ENCODE measurements at regions of chr10 and their contacts with region 1.

Region 1: GRCh38 chr10:32239770-32240169 is 107.2 kb downstream of the EPC1 start:
- DNase-seq: no peak
- H3K4me3 Mint-ChIP-seq: no peak overlapping the region
- H3K27ac Mint-ChIP-seq: no peak overlapping the region
- H3K4me1 Mint-ChIP-seq: peaks cover 14% of the 10 kb centered on the region
- H3K27me3 Mint-ChIP-seq: peaks cover 2% of the 10 kb centered on the region

Region 2: GRCh38 chr10:31830887-31831286 is 408.9 kb before region 1 on chr10:
- CTCF ChIA-PET with region 1: no interaction called
- POLR2A ChIA-PET with region 1: no interaction called
- intact Hi-C with region 1: no loop called
- DNase-seq: no peak
- H3K4me3 Mint-ChIP-seq: no peak overlapping the region
- H3K27ac Mint-ChIP-seq: no peak overlapping the region
- H3K4me1 Mint-ChIP-seq: peaks cover 3% of the 10 kb centered on the region
- H3K27me3 Mint-ChIP-seq: no peaks in the 10 kb centered on the region

Region 3: GRCh38 chr10:31921031-31921430 is 318.7 kb before region 1 on chr10:
- CTCF ChIA-PET with region 1: no interaction called
- POLR2A ChIA-PET with region 1: no interaction called
- intact Hi-C with region 1: loop called (anchors 5 kb)
- DNase-seq: peak; percentile 43
- H3K4me3 Mint-ChIP-seq: peak overlapping the region; percentile 45
- H3K27ac Mint-ChIP-seq: peak overlapping the region; percentile 35
- H3K4me1 Mint-ChIP-seq: peaks cover 56% of the 10 kb centered on the region
- H3K27me3 Mint-ChIP-seq: no peaks in the 10 kb centered on the region

Region 4: DNA sequence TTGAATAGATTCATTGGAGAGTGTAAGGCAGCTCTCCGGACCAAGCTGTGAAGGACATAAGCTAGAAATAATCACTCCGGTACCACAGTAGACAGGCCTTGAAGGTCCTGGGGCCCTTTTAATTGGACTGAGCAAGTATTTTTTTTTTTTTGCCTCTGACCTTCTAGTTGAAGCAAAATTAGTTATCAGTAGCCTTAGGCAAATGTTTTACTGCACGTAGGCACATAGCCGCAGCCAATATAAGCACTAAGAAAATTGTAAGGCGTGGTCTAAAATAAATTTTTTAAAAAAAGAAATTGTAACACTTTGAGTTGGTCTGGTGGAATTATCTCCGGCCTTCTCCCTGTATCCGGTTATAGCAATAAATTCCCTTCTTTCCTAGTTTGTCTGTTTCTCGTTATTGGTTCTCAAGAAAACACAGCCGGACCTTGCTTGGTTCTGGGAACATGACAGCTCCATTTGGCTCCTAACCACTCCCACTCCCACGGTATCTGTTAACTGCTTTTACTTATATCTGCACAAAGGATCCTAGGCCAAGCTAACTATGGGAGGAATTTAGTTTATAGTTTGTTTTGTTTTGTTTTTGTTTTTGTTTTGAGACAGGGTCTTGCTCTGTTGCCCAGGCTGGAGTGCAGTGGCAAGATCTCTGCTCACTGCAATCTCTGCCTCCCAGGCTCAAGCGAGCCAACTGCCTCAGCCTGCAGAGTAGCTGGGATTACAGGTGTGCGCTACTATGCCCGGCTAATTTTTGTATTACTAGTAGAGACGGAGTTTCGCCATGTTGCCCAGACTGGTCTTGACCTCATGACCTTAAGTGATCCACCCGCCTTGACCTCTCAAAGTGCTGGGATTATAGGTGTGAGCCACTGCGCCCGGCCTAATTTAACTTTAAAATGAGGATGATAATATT is 59.1 kb before region 1 on chr10:
- CTCF ChIA-PET with region 1: no interaction called
- POLR2A ChIA-PET with region 1: no interaction called
- intact Hi-C with region 1: no loop called
- DNase-seq: no peak
- H3K4me3 Mint-ChIP-seq: no peak overlapping the region
- H3K27ac Mint-ChIP-seq: no peak overlapping the region
- H3K4me1 Mint-ChIP-seq: no peaks in the 10 kb centered on the region
- H3K27me3 Mint-ChIP-seq: no peaks in the 10 kb centered on the region

Region 5: GRCh38 chr10:32256613-32257437 is 17.1 kb after region 1 on chr10:
- CTCF ChIA-PET with region 1: interaction called, 39 read pairs
- POLR2A ChIA-PET with region 1: interaction called, 6 read pairs
- intact Hi-C with region 1: no loop called
- DNase-seq: peak; percentile 81
- H3K4me3 Mint-ChIP-seq: no peak overlapping the region
- H3K27ac Mint-ChIP-seq: no peak overlapping the region
- H3K4me1 Mint-ChIP-seq: peaks cover 15% of the 10 kb centered on the region
- H3K27me3 Mint-ChIP-seq: no peaks in the 10 kb centered on the region

Region 6: GRCh38 chr10:32332299-32332750 is 92.6 kb after region 1 on chr10:
- CTCF ChIA-PET with region 1: interaction called, 3 read pairs
- POLR2A ChIA-PET with region 1: interaction called, 5 read pairs
- intact Hi-C with region 1: loop called (anchors 2 kb)
- DNase-seq: peak; percentile 90
- H3K4me3 Mint-ChIP-seq: peak overlapping the region; percentile 75
- H3K27ac Mint-ChIP-seq: peak overlapping the region; percentile 91
- H3K4me1 Mint-ChIP-seq: peaks cover 93% of the 10 kb centered on the region
- H3K27me3 Mint-ChIP-seq: no peaks in the 10 kb centered on the region

Region 7: GRCh38 chr10:32346134-32346550 is 106.4 kb after region 1 on chr10:
- CTCF ChIA-PET with region 1: interaction called, 12 read pairs
- POLR2A ChIA-PET with region 1: interaction called, 8 read pairs
- intact Hi-C with region 1: loop called (anchors 2 kb)
- DNase-seq: peak; percentile 97
- H3K4me3 Mint-ChIP-seq: peak overlapping the region; percentile 94
- H3K27ac Mint-ChIP-seq: peak overlapping the region; percentile 99
- H3K4me1 Mint-ChIP-seq: peaks cover 63% of the 10 kb centered on the region
- H3K27me3 Mint-ChIP-seq: no peaks in the 10 kb centered on the region

Region 8: DNA sequence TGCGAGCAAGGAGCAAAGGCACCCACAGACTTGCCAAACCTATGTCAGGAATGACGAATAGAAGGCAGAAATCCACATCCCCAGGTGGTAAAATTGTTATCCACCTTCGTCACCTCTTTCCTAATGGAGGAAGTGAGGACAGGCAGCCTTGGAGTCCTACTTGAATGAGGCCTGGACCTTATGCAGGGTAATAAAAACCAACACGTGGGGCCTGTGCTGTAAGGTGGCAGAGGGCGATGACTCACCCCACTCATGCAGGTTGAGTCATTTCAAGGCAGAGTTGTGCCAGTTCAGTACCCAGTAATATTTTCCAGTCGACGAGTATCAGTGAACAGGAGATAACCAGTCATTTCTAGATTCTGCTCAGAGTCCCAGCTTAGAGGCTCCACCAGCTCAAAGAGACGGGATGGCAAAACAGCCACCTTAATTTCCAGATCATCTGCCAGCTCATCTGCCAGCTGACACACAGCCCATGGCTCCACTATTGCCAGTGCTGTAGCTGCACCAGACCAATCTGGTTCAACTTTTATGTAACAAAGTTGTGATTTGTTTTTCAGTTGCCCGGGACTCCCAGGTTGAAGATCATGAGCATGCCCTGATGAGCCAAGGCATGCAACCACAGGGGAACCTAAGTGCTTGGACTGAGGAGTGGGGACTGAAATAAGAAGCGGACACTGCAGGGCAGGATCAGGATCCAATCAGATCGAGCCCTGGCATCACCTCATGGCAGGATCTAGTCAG is 894.4 kb after region 1 on chr10:
- CTCF ChIA-PET with region 1: no interaction called
- POLR2A ChIA-PET with region 1: no interaction called
- intact Hi-C with region 1: loop called (anchors 10 kb)
- DNase-seq: peak; percentile 90
- H3K4me3 Mint-ChIP-seq: peak overlapping the region; percentile 50
- H3K27ac Mint-ChIP-seq: peak overlapping the region; percentile 90
- H3K4me1 Mint-ChIP-seq: peaks cover 91% of the 10 kb centered on the region
- H3K27me3 Mint-ChIP-seq: peaks cover 1% of the 10 kb centered on the region